ENCODE measurements at regions of chr9 and their contacts with region 1.

Region 1: DNA sequence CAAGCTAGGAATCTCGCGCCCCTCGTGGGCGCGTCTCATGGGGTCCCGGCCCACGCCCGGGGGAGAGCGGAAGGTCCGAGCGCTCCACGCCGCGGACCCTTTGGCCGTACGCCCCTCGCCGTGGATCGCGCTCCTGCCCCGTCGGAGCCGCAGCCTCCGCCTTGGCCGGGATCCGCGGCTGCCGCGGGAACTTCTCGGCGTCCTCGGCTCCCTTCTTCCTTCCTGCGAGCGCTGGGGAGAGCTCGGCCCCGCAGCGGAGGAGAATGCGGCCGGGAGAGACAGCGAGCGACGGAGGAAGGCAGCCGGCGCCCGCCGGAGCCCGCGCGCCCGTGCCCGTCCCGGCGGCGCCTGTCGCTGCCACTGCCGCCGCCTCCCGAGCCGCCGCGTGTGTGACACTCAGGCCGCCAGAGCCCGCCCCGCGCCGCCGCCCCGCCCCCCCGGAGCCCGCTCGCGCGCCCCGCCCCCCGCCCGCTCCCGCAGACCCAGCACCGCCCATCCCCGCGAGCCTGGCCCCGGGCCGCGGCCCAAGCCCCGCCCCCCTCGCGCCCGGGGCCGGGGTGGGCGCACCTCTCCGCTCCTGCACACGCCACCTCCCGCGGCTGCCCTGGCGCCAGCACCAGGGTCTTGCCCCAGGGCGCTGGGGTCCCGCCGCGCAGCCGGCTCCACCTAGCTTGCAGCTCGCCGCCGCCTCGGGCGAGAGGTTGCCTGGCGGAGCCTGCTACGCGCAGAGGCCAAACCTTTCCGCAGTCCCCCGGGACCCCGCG is at the start of gene SHB:
- DNase-seq: peak; percentile 89 to 92 (median 89)
- ATAC-seq: peak; percentile 76
- H3K4me3 ChIP-seq: peak within 1 kb of the TSS; percentile 78
- H3K4me1 ChIP-seq: peaks cover 43% of the 10 kb centered on the region
- CTCF ChIP-seq: no peak
- total RNA-seq, gene SHB: 20.3 to 23.9 (median 20.6) TPM

Region 2: GRCh38 chr9:37920471-37921167 is 148.4 kb before region 1 on chr9:
- intact Hi-C with region 1: loop called in 1 of 2 experiments (anchors 10 kb)
- DNase-seq: peak in 1 of 3 donors; percentile 27
- ATAC-seq: peak; percentile 29
- H3K4me3 ChIP-seq: no peak overlapping the region
- H3K4me1 ChIP-seq: no peaks in the 10 kb centered on the region
- CTCF ChIP-seq: no peak

Region 3: GRCh38 chr9:37966412-37967271 is 102.4 kb before region 1 on chr9:
- intact Hi-C with region 1: loop called in 1 of 2 experiments (anchors 5 kb)
- DNase-seq: peak in 2 of 3 donors; percentile 37 to 46
- ATAC-seq: peak; percentile 30
- H3K4me3 ChIP-seq: no peak overlapping the region
- H3K4me1 ChIP-seq: peaks cover 55% of the 10 kb centered on the region
- CTCF ChIP-seq: no peak